ENCODE measurements at regions of chr5 and their contacts with region 1.

Region 1: GRCh38 chr5:129003226-129003625 is 37.9 kb downstream of the SLC27A6 start:
- DNase-seq: no peak
- ATAC-seq: no peak

Region 2: DNA sequence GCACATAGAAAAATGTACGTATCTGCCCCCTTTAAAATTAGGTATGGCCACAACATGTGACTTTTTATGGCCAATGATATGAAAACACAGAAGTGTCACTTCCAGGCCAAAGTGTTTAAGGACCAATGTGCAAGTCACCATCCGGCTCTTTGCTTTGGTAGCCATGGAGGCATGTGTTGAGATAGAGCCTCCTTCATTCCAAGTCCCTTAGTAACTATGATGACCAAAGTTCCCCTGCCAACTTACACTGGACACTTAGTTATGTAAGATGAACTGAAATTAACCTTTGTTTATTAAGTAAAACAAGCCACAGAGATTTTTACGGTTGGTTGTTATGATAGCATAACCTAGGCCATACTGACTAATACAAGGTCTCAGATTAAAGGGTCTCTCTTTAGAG is 516.2 kb before region 1 on chr5:
- intact Hi-C with region 1: no loop called
- DNase-seq: no peak
- ATAC-seq: no peak

Region 3: DNA sequence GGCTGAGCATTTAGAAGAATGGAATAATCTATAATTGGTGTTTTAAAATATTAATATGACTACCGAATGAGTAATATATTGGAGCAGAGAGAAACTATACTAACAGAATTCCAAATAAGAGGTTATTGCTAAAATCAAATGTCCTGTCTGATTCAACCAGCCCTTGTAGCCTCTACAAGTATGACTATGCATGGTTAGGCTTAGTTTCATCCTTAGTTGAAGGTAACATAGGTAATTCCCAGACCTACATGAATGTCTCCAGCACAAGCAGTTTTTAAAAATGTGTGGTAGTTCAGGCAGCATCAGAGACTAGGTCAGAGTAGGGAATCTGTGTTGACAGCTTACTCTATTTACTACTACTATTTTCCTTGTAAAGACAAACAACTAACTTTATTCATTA is 89.7 kb before region 1 on chr5:
- intact Hi-C with region 1: loop called (anchors 5 kb)
- DNase-seq: no peak
- ATAC-seq: no peak

Measured in Right ventricle myocardium inferior (tissue), 1 donor.